Activated CD4-positive, alpha-beta memory T cell treated with anti-CD3 and anti-CD28 coated beads for 36 hours (primary cell): ENCODE measurements at regions of chr17 and their contacts with region 1.

Region 1: GRCh38 chr17:70137451-70138230 is 31.7 kb upstream of the KCNJ2 start:
- DNase-seq: peak; percentile 58
- H3K4me3 Mint-ChIP-seq: peak overlapping the region; percentile 26
- H3K27ac Mint-ChIP-seq: peak overlapping the region; percentile 65
- H3K4me1 Mint-ChIP-seq: peaks cover 23% of the 10 kb centered on the region
- H3K27me3 Mint-ChIP-seq: peaks cover 14% of the 10 kb centered on the region

Region 2: DNA sequence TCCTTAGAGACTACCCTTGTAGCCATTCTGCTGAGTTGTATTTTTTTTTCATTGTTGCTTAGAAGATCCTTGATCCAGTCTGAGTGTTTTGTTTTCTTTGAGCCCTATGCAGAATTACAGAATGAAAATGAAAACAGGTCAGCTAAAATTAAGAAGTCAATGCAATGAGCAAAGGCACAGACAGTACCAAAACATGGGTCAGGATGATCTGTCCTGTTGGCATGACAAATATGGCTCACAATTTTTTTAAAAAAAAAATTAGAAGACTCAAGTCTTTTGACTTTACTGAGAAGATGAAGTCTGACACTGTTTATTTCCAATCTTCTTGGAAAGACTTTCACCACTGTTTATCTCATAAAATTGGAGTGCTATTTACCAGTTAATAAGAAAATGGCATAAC is 30.2 kb before region 1 on chr17:
- CTCF ChIA-PET with region 1: no interaction called
- POLR2A ChIA-PET with region 1: no interaction called
- intact Hi-C with region 1: loop called (anchors 1 kb)
- DNase-seq: no peak
- H3K4me3 Mint-ChIP-seq: no peak overlapping the region
- H3K27ac Mint-ChIP-seq: no peak overlapping the region
- H3K4me1 Mint-ChIP-seq: no peaks in the 10 kb centered on the region
- H3K27me3 Mint-ChIP-seq: peaks cover 10% of the 10 kb centered on the region

Region 3: DNA sequence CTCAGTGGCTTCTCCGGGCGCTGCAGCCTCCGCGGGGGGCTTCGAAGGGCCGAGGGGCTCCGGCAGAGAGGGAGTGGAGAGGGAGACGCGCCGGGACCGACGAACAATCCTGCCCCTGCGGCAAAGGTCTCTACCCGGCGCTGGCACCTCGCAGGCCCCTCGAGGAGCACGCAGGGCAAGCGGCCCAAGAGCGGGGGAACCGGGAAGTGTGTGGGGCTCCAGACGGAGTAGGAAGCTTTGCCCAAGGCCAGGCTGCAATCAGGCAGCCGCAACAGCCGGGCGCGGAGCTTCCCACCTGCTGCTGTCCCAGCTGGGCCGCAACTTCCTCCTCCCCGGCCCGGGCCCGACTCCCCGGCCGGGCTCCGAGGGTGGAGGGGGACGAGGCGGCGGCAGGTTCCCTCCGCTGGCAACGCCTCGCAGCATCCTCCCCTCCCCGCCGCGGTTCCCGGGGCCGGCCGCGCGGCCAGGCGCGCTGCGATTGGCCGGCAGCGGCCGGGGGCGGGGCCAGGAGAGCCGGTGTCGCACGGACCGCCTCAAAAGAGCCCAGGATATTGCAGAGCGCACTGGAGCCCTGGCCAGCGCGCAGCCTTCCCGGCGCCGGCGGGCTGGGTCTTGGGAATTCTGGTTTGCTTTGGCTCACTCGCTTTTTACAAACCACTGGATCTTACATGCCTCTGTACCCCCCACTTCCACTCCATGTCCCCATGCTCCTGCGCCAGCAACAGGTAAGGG is 31.5 kb after region 1 on chr17 and contains the start of gene KCNJ2:
- CTCF ChIA-PET with region 1: interaction called, 3 read pairs
- POLR2A ChIA-PET with region 1: no interaction called
- intact Hi-C with region 1: loop called (anchors 1 kb)
- DNase-seq: peak; percentile 68
- H3K4me3 Mint-ChIP-seq: peak within 1 kb of the TSS; percentile 57
- H3K27ac Mint-ChIP-seq: no peak within 1 kb of the TSS
- H3K4me1 Mint-ChIP-seq: peaks cover 20% of the 10 kb centered on the region
- H3K27me3 Mint-ChIP-seq: peaks cover 61% of the 10 kb centered on the region
- total RNA-seq, gene KCNJ2: not detected

Region 4: DNA sequence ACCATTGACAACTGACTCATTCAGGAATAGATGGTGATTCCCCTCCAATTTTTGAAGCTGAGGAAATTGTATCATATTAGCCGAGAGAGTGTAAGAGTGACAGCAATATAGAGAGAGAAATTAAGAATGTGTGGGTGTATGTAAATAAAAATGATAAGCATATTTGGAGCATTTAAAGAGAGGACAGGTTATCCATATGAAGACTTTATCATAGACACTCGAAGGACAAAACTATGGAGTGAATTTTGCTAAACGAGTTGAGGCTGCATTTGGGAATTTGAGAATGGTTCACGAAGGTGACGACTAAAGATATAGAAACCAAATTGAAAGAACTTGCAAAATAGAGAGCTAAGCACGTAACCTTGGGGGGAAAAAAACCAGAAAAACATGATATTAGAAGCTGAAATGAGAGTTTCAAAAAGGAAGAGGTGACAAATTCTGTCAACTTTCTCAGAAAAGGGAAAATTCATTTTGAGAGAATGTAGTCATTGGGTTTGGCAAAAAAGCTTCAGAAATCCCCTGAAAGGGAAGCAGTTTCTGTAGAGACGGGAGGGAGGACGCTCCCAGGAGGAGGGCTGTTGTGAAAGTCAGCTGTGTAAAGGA is 161.4 kb after region 1 on chr17:
- CTCF ChIA-PET with region 1: no interaction called
- POLR2A ChIA-PET with region 1: no interaction called
- intact Hi-C with region 1: loop called (anchors 1 kb)
- DNase-seq: no peak
- H3K4me3 Mint-ChIP-seq: no peak overlapping the region
- H3K27ac Mint-ChIP-seq: no peak overlapping the region
- H3K4me1 Mint-ChIP-seq: peaks cover 2% of the 10 kb centered on the region
- H3K27me3 Mint-ChIP-seq: peaks cover 2% of the 10 kb centered on the region